Naive thymus-derived CD4-positive, alpha-beta T cell (primary cell): ENCODE measurements at regions of chr2 and their contacts with region 1.

Region 1: GRCh38 chr2:239298116-239298804 is 102.6 kb downstream of the HDAC4 start:
- DNase-seq: peak in 8 of 9 donors; percentile 67 to 88 (median 84)
- ATAC-seq: peak; percentile 85
- H3K4me3 ChIP-seq: peak overlapping the region; percentile 66
- H3K4me3 Mint-ChIP-seq: peak overlapping the region; percentile 79 to 94 (median 90)
- H3K27ac ChIP-seq: peak overlapping the region; percentile 77
- H3K27ac Mint-ChIP-seq: peak overlapping the region; percentile 89 to 97 (median 93)
- H3K4me1 ChIP-seq: peaks cover 34 to 64% of the 10 kb centered on the region in 2 donors
- H3K4me1 Mint-ChIP-seq: peaks cover 30 to 95% (median 77%) of the 10 kb centered on the region in 7 donors
- H3K27me3 ChIP-seq: no peaks in the 10 kb centered on the region
- H3K27me3 Mint-ChIP-seq: no peaks in the 10 kb centered on the region

Region 2: DNA sequence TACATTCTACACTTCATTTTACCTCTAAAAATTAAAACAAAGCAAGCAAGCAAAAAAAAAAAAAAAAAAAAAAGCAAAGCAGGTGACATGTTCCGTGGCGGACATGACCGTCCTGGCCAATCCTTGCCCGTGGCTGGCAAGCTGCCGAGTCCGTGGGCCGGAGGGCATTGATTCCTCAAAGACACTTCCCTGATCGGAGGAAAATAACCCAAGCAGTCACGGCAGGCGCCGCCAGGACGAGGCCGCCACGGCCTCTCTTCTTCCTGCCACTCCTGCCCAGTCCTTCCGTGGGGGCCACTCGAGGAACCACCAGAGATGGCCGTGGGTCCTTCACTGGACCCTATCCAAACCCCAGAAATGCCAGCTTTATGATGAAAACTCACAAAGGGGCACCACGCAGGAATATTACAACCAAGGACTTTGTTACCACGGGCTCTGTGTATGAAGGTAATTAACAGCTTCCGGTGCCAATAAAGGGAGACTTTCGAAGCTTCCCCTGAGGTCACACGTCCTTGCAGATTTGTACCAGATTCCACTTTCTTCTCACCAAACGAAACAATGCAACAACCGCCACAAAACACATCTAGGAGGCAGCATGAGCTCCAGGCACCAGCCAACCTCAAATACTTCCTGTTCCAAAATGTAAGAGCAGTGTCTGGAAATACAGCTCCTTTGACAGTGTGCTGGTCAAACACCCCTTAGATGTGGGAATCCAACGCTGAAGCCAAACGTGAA is 67.8 kb before region 1 on chr2:
- CTCF ChIA-PET with region 1: interaction called, 7 read pairs
- POLR2A ChIA-PET with region 1: interaction called, 3 read pairs
- intact Hi-C with region 1: loop called in 1 of 2 experiments (anchors 1 kb)
- DNase-seq: peak in 7 of 9 donors; percentile 25 to 58 (median 40)
- ATAC-seq: peak; percentile 53
- H3K4me3 ChIP-seq: peak overlapping the region; percentile 63
- H3K4me3 Mint-ChIP-seq: peak overlapping the region; percentile 20 to 87 (median 74)
- H3K27ac ChIP-seq: peak overlapping the region; percentile 72
- H3K27ac Mint-ChIP-seq: peak overlapping the region; percentile 75 to 95 (median 86)
- H3K4me1 ChIP-seq: peaks cover 10 to 45% of the 10 kb centered on the region in 2 donors
- H3K4me1 Mint-ChIP-seq: peaks cover 50 to 91% (median 75%) of the 10 kb centered on the region in 7 donors
- H3K27me3 ChIP-seq: no peaks in the 10 kb centered on the region
- H3K27me3 Mint-ChIP-seq: no peaks in the 10 kb centered on the region

Region 3: GRCh38 chr2:239318790-239319661 is 20.8 kb after region 1 on chr2:
- CTCF ChIA-PET with region 1: interaction called, 3 read pairs
- POLR2A ChIA-PET with region 1: interaction called, 80 read pairs
- intact Hi-C with region 1: loop called (anchors 1 kb)
- DNase-seq: peak in 4 of 9 donors; percentile 6 to 31 (median 28)
- ATAC-seq: peak; percentile 5
- H3K4me3 ChIP-seq: no peak overlapping the region
- H3K4me3 Mint-ChIP-seq: peak overlapping the region; percentile 78 to 90 (median 88)
- H3K27ac ChIP-seq: peak overlapping the region; percentile 64
- H3K27ac Mint-ChIP-seq: peak overlapping the region; percentile 93 to 100 (median 98)
- H3K4me1 ChIP-seq: peaks cover 31 to 41% of the 10 kb centered on the region in 2 donors
- H3K4me1 Mint-ChIP-seq: peaks cover 34 to 91% (median 78%) of the 10 kb centered on the region in 7 donors
- H3K27me3 ChIP-seq: no peaks in the 10 kb centered on the region
- H3K27me3 Mint-ChIP-seq: no peaks in the 10 kb centered on the region

Region 4: GRCh38 chr2:239369631-239370161 is 71.4 kb after region 1 on chr2:
- CTCF ChIA-PET with region 1: interaction called, 3 read pairs
- POLR2A ChIA-PET with region 1: interaction called, 11 read pairs
- intact Hi-C with region 1: no loop called
- DNase-seq: peak; percentile 39 to 95 (median 92)
- ATAC-seq: peak; percentile 96
- H3K4me3 ChIP-seq: peak overlapping the region; percentile 46
- H3K4me3 Mint-ChIP-seq: peak overlapping the region in 4 of 10 donors; percentile 81 to 87 (median 84)
- H3K27ac ChIP-seq: peak overlapping the region; percentile 96
- H3K27ac Mint-ChIP-seq: no peak overlapping the region
- H3K4me1 ChIP-seq: peaks cover 11 to 41% of the 10 kb centered on the region in 2 donors
- H3K4me1 Mint-ChIP-seq: peaks cover 0 to 22% (median 10%) of the 10 kb centered on the region in 7 donors
- H3K27me3 ChIP-seq: no peaks in the 10 kb centered on the region
- H3K27me3 Mint-ChIP-seq: no peaks in the 10 kb centered on the region

Region 5: GRCh38 chr2:240021488-240022104 is 723.3 kb after region 1 on chr2:
- CTCF ChIA-PET with region 1: no interaction called
- POLR2A ChIA-PET with region 1: no interaction called
- intact Hi-C with region 1: no loop called
- DNase-seq: peak; percentile 18 to 68 (median 51)
- ATAC-seq: peak; percentile 43
- H3K4me3 ChIP-seq: no peak overlapping the region
- H3K4me3 Mint-ChIP-seq: no peak overlapping the region
- H3K27ac ChIP-seq: no peak overlapping the region
- H3K27ac Mint-ChIP-seq: peak overlapping the region in 1 of 9 donors; percentile 32
- H3K4me1 ChIP-seq: peaks cover 8 to 15% of the 10 kb centered on the region in 2 donors
- H3K4me1 Mint-ChIP-seq: peaks cover 15 to 39% (median 35%) of the 10 kb centered on the region in 7 donors
- H3K27me3 ChIP-seq: no peaks in the 10 kb centered on the region
- H3K27me3 Mint-ChIP-seq: peaks cover 0 to 2% (median 0%) of the 10 kb centered on the region in 5 donors